ENCODE measurements at regions of chr12 and their contacts with region 1.

Region 1: DNA sequence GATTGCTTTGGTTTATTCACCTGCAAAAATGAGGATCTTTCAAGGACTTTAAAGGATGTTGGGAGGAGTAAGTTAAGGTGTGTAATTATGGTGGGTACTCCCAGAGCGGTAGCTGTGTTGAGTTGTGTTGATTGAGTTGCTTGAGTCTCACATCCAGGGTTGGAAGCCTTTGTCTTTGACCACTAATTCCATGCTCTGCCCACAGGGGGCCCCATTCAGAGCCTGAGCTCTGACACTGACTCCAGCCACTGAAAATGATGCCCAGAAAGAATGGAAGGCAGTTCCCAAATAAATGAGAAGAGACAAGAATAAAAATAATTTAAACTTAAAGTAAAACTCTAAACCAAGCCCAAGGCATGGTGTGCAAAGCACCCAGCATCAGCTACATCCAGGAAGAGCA is 237.4 kb upstream of the PWP1 start:
- DNase-seq: peak in 1 of 2 experiments; percentile 76
- H3K4me3 ChIP-seq: no peak overlapping the region
- H3K27ac ChIP-seq: no peak overlapping the region
- H3K4me1 ChIP-seq: peaks cover 0 to 7% (median 2%) of the 10 kb centered on the region in 4 experiments; a peak in 1 of 7 replicates
- H3K27me3 ChIP-seq: no peaks in the 10 kb centered on the region
- CTCF ChIP-seq: peak; percentile 40 to 70 (median 70)
- EP300 ChIP-seq: no peak
- POLR2A ChIP-seq: no peak
- RAD21 ChIP-seq: peak; percentile 50 to 64

Region 2: DNA sequence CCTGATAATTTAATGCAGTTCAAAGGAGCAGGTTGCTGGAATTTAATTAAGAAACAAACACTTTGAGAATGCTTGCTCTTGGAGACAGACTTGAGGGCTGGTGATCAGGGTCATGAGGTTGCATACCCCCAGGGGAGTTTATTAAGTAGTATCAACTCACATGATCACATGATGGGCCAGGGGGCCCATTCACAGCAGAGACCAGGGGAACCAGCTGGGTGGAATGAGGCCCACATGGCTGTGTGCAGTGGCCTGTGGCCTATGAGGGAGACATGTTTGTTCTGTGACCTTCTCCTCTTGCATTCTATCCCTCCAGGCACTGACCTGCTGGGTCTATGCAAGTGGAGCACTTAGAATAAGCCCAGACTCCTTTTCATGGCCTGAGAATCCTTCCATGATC is 29.2 kb before region 1 on chr12:
- CTCF ChIA-PET with region 1: interaction called, 10 read pairs
- POLR2A ChIA-PET with region 1: no interaction called
- DNase-seq: no peak
- H3K4me3 ChIP-seq: no peak overlapping the region
- H3K27ac ChIP-seq: no peak overlapping the region
- H3K4me1 ChIP-seq: no peaks in the 10 kb centered on the region
- H3K27me3 ChIP-seq: no peaks in the 10 kb centered on the region
- CTCF ChIP-seq: no peak
- EP300 ChIP-seq: no peak
- POLR2A ChIP-seq: no peak
- RAD21 ChIP-seq: no peak

Region 3: GRCh38 chr12:107436376-107436775 is 11.8 kb before region 1 on chr12:
- CTCF ChIA-PET with region 1: interaction called, 41 read pairs
- POLR2A ChIA-PET with region 1: interaction called, 5 read pairs
- DNase-seq: no peak
- H3K4me3 ChIP-seq: no peak overlapping the region
- H3K27ac ChIP-seq: no peak overlapping the region
- H3K4me1 ChIP-seq: peaks cover 3 to 5% (median 3%) of the 10 kb centered on the region in 4 experiments; a peak in 6 of 7 replicates
- H3K27me3 ChIP-seq: no peaks in the 10 kb centered on the region
- CTCF ChIP-seq: no peak
- EP300 ChIP-seq: no peak
- POLR2A ChIP-seq: no peak
- RAD21 ChIP-seq: no peak

Region 4: DNA sequence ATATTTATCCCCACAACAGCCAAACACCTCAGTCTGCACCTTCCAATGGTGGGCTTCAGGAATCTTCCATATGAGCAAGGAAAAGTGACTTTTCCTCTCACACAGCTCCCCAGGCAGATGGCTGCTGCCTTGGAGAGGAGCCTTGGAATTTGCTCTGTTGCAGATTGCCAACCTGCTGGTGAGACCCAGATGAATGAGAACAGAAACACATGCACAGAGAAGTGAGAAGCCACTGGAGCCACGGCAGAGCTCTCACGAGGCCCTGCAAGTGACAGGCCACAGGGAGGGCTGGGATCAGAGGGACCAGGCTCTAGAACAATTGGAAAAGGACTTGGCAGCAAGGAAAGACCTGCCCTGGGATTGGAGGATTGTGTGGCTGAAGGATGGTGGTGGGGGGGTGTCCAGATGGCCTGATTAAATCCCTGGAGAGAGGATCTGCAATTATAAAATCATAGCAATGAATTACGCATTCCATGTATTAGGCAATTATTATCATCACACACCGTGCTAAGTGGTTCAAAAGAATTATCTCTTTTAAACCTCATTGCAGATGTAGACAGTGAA is 152.5 kb after region 1 on chr12:
- CTCF ChIA-PET with region 1: interaction called, 58 read pairs
- POLR2A ChIA-PET with region 1: no interaction called
- DNase-seq: no peak
- H3K4me3 ChIP-seq: no peak overlapping the region
- H3K27ac ChIP-seq: no peak overlapping the region
- H3K4me1 ChIP-seq: peaks cover 0 to 5% (median 0%) of the 10 kb centered on the region in 4 experiments; a peak in 1 of 7 replicates
- H3K27me3 ChIP-seq: no peaks in the 10 kb centered on the region
- CTCF ChIP-seq: no peak
- EP300 ChIP-seq: no peak
- POLR2A ChIP-seq: no peak
- RAD21 ChIP-seq: no peak